CD4-positive, alpha-beta memory T cell (primary cell): ENCODE measurements at regions of chr19 and their contacts with region 1.

Region 1: DNA sequence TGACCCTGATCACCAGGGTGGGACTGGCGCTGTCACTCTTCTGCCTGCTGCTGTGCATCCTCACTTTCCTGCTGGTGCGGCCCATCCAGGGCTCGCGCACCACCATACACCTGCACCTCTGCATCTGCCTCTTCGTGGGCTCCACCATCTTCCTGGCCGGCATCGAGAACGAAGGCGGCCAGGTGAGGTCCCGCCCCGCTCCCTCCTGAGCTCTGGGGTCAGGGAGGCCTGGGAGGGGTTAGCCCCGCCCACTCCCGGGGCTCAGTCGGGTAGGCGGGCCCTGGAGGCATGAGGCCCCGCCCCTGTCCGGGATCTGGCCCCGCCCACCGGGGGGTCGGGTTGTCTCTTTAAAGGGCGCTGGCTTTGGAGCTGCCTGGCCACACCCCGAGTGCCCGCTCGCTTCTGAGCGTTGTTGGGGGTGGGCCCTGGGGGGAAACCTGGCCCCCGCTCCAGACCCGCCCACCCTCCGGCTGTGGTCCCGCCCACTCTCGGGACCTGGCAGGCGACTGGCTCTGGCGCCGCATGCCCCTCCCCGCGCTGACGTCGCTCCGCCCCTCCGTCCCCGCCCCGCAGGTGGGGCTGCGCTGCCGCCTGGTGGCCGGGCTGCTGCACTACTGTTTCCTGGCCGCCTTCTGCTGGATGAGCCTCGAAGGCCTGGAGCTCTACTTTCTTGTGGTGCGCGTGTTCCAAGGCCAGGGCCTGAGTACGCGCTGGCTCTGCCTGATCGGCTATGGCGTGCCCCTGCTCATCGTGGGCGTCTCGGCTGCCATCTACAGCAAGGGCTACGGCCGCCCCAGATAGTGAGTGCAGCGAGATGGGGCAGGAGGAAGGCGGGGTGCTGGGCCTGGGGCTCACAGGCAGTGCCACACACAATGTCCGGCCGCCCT is 13.1 kb downstream of the DDX39A start:
- DNase-seq: peak; percentile 87 to 93 (median 89)
- H3K4me3 ChIP-seq: no peak overlapping the region
- H3K4me3 Mint-ChIP-seq: peak overlapping the region in 2 of 8 donors; percentile 31 to 46
- H3K27ac ChIP-seq: peak overlapping the region; percentile 20
- H3K27ac Mint-ChIP-seq: peak overlapping the region; percentile 72 to 94 (median 81)
- H3K4me1 ChIP-seq: peaks cover 37% of the 10 kb centered on the region
- H3K4me1 Mint-ChIP-seq: peaks cover 14 to 71% (median 25%) of the 10 kb centered on the region in 4 donors
- H3K27me3 ChIP-seq: no peaks in the 10 kb centered on the region
- H3K27me3 Mint-ChIP-seq: no peaks in the 10 kb centered on the region

Region 2: GRCh38 chr19:14218620-14219330 is 187.2 kb before region 1 on chr19:
- CTCF ChIA-PET with region 1: interaction called, 14 read pairs
- POLR2A ChIA-PET with region 1: no interaction called
- intact Hi-C with region 1: loop called (anchors 5 kb)
- DNase-seq: no peak
- H3K4me3 ChIP-seq: no peak overlapping the region
- H3K4me3 Mint-ChIP-seq: no peak overlapping the region
- H3K27ac ChIP-seq: no peak overlapping the region
- H3K27ac Mint-ChIP-seq: peak overlapping the region in 3 of 7 donors; percentile 30 to 69 (median 42)
- H3K4me1 ChIP-seq: no peaks in the 10 kb centered on the region
- H3K4me1 Mint-ChIP-seq: peaks cover 7 to 21% (median 11%) of the 10 kb centered on the region in 4 donors
- H3K27me3 ChIP-seq: no peaks in the 10 kb centered on the region
- H3K27me3 Mint-ChIP-seq: peaks cover 0 to 1% of the 10 kb centered on the region in 2 donors

Region 3: GRCh38 chr19:14354445-14354844 is 51.6 kb before region 1 on chr19:
- CTCF ChIA-PET with region 1: interaction called, 121 read pairs
- POLR2A ChIA-PET with region 1: interaction called, 206 read pairs
- intact Hi-C with region 1: no loop called
- DNase-seq: no peak
- H3K4me3 ChIP-seq: no peak overlapping the region
- H3K4me3 Mint-ChIP-seq: peak overlapping the region in 1 of 8 donors; percentile 15
- H3K27ac ChIP-seq: peak overlapping the region; percentile 61
- H3K27ac Mint-ChIP-seq: peak overlapping the region in 5 of 7 donors; percentile 35 to 99 (median 93)
- H3K4me1 ChIP-seq: peaks cover 55% of the 10 kb centered on the region
- H3K4me1 Mint-ChIP-seq: peaks cover 22 to 39% (median 29%) of the 10 kb centered on the region in 4 donors
- H3K27me3 ChIP-seq: no peaks in the 10 kb centered on the region
- H3K27me3 Mint-ChIP-seq: no peaks in the 10 kb centered on the region

Region 4: DNA sequence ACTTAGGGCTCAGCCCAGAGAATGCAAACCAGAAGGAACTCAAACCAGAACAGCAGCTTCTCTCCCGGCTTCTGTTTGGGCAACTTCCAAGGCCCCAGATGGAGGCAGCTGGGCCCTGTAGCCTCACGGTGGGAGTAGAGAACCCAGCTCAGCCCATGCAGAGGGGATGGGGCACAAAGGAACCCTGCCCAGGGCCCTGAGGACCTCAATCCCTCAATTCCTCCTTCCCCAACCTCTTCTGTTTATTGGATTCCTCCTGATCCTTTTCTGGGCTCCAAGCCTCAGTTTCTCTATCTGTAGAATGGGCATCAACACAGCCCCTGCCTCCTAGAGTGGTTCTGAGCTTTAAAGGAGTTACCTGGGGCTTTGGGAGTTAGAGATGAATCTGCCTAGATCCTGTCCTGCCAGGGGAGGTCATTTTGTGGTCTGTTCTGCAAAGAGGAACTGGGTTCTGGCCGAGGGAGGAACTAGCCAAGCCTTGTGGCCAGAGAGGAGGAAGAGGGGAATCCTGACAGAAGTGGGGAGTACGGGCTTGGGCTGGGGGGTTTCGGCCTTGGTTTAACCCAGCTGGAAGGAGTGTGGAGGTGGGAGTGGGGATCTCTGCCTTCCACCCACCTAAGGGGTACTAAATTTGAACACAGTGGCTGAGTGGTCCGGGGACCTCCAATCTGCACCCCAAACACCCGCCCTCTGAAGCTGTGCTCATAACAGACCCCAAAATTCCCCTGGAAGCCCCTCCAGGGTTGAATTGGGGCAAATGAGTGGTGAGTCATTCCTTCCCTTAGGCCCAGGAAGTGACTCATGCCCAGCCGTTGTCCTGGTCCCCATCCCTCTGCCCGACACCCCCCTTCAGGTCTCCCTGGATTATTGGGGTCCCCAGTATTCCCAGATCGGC is 22.1 kb before region 1 on chr19:
- CTCF ChIA-PET with region 1: interaction called, 61 read pairs
- POLR2A ChIA-PET with region 1: interaction called, 95 read pairs
- intact Hi-C with region 1: loop called (anchors 1 kb)
- DNase-seq: peak in 3 of 5 donors; percentile 40 to 91 (median 41)
- H3K4me3 ChIP-seq: peak overlapping the region; percentile 40 to 82
- H3K4me3 Mint-ChIP-seq: peak overlapping the region; percentile 91 to 99 (median 98)
- H3K27ac ChIP-seq: peak overlapping the region; percentile 99
- H3K27ac Mint-ChIP-seq: peak overlapping the region; percentile 96 to 100 (median 98)
- H3K4me1 ChIP-seq: peaks cover 41% of the 10 kb centered on the region
- H3K4me1 Mint-ChIP-seq: peaks cover 19 to 66% (median 37%) of the 10 kb centered on the region in 4 donors
- H3K27me3 ChIP-seq: no peaks in the 10 kb centered on the region
- H3K27me3 Mint-ChIP-seq: peaks cover 0 to 4% of the 10 kb centered on the region in 2 donors

Region 5: DNA sequence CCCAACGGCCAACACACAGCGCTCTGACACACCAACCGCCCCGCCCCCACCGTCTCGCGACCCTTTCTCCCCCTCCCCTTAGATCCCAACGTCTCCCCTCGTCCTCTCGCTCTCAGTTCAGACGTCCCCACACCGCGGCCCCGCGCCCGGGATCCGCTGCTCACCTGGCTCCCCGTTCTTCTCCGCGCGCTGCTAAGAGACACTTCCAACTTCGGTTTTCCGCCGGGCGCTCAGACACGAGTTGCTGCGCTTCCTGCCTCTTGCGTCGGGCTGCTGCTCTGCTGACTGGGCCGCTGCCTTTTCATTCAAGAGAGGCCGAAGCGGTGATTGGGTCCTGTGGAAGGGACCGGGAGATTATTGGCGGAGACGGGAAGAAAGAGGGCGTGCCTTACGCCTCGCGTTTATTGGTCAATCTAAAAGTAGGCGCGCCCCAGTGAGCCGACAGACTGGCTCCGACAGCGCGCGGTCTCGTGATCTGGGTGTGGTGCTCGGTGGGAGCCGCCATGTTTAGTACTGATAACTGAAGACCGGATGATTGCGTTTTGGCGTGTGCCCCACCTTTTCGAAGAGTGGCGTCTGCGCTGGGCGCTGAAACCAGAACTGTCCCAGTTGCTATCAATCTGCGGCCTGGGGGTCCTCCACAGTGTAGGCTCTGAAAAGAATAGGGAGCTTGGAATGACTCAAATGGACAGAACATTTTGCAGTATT is 13.3 kb after region 1 on chr19 and contains the start of gene DDX39A:
- CTCF ChIA-PET with region 1: interaction called, 15 read pairs
- POLR2A ChIA-PET with region 1: interaction called, 38 read pairs
- intact Hi-C with region 1: loop called (anchors 1 kb)
- DNase-seq: peak; percentile 95 to 99 (median 99)
- H3K4me3 ChIP-seq: peak within 1 kb of the TSS; percentile 80 to 84
- H3K4me3 Mint-ChIP-seq: peak within 1 kb of the TSS; percentile 88 to 99 (median 92)
- H3K27ac ChIP-seq: peak within 1 kb of the TSS; percentile 87
- H3K27ac Mint-ChIP-seq: peak within 1 kb of the TSS; percentile 94 to 98 (median 97)
- H3K4me1 ChIP-seq: peaks cover 40% of the 10 kb centered on the region
- H3K4me1 Mint-ChIP-seq: peaks cover 20 to 47% (median 34%) of the 10 kb centered on the region in 4 donors
- H3K27me3 ChIP-seq: no peaks in the 10 kb centered on the region
- H3K27me3 Mint-ChIP-seq: no peaks in the 10 kb centered on the region
- total RNA-seq, gene DDX39A: 148 TPM